Activated CD4-positive, alpha-beta memory T cell treated with anti-CD3 and anti-CD28 coated beads for 36 hours (primary cell): ENCODE measurements at regions of chr1 and their contacts with region 1.

Region 1: GRCh38 chr1:167517535-167518330 is 596 bp downstream of the CD247 start:
- DNase-seq: peak; percentile 96
- H3K4me3 Mint-ChIP-seq: peak overlapping the region; percentile 88
- H3K27ac Mint-ChIP-seq: peak overlapping the region; percentile 98
- H3K4me1 Mint-ChIP-seq: peaks cover 35% of the 10 kb centered on the region
- H3K27me3 Mint-ChIP-seq: no peaks in the 10 kb centered on the region

Region 2: GRCh38 chr1:167454894-167455785 is 62.6 kb before region 1 on chr1:
- CTCF ChIA-PET with region 1: interaction called, 39 read pairs
- POLR2A ChIA-PET with region 1: interaction called, 58 read pairs
- intact Hi-C with region 1: loop called (anchors 1 kb)
- DNase-seq: peak; percentile 88
- H3K4me3 Mint-ChIP-seq: peak overlapping the region; percentile 78
- H3K27ac Mint-ChIP-seq: peak overlapping the region; percentile 84
- H3K4me1 Mint-ChIP-seq: peaks cover 64% of the 10 kb centered on the region
- H3K27me3 Mint-ChIP-seq: no peaks in the 10 kb centered on the region

Region 3: GRCh38 chr1:167474191-167474716 is 43.5 kb before region 1 on chr1:
- CTCF ChIA-PET with region 1: interaction called, 4 read pairs
- POLR2A ChIA-PET with region 1: interaction called, 14 read pairs
- intact Hi-C with region 1: no loop called
- DNase-seq: peak; percentile 69
- H3K4me3 Mint-ChIP-seq: peak overlapping the region; percentile 27
- H3K27ac Mint-ChIP-seq: peak overlapping the region; percentile 64
- H3K4me1 Mint-ChIP-seq: peaks cover 69% of the 10 kb centered on the region
- H3K27me3 Mint-ChIP-seq: no peaks in the 10 kb centered on the region

Region 4: DNA sequence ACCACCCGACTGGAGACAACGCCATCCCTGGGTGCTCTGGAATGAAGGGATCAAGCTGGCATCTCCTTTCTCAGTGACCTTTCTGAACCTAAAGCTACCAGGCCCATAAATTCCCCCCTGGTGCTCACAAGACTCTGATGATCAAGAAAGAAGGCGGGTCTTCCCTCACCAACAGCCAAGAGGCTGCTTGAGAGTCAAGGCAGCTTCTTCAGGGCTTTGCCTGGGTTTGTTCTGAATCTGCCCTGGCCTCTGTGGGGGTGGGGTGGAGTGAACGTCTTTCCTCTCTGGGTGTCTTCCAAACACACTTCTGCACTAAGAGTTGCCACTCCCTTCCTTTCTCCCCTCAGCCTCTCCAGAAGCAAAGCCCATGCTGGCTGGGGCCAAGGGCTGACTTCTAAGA is 35.5 kb before region 1 on chr1:
- CTCF ChIA-PET with region 1: interaction called, 5 read pairs
- POLR2A ChIA-PET with region 1: interaction called, 14 read pairs
- intact Hi-C with region 1: loop called (anchors 5 kb)
- DNase-seq: peak; percentile 82
- H3K4me3 Mint-ChIP-seq: peak overlapping the region; percentile 21
- H3K27ac Mint-ChIP-seq: peak overlapping the region; percentile 88
- H3K4me1 Mint-ChIP-seq: peaks cover 93% of the 10 kb centered on the region
- H3K27me3 Mint-ChIP-seq: no peaks in the 10 kb centered on the region

Region 5: DNA sequence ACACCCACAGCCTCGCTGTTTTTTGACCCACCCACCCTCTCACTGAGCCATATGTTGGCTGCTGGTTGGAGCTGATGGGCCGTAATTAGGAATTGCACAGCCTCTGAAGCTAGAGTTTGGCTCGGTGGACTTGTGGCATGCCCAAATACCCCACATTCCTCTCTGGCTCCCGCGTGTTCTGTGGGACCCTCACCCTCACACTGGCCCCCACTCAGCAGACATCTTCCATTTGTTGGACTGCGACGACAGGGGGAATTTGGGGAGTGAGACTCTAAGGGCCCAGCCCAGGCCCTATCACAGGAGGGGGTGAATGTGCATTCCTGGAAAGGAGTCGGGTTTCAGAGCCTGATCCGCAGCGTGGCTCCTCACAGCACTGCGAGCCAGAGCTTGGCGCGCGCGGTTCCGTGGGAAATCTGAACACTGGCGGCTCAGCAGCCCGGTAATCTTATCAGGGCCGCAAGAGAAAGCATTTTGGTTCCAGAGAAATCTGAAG is 117.5 kb after region 1 on chr1:
- CTCF ChIA-PET with region 1: no interaction called
- POLR2A ChIA-PET with region 1: no interaction called
- intact Hi-C with region 1: no loop called
- DNase-seq: peak; percentile 7
- H3K4me3 Mint-ChIP-seq: no peak overlapping the region
- H3K27ac Mint-ChIP-seq: peak overlapping the region; percentile 97
- H3K4me1 Mint-ChIP-seq: peaks cover 72% of the 10 kb centered on the region
- H3K27me3 Mint-ChIP-seq: no peaks in the 10 kb centered on the region